ENCODE measurements at regions of chr19 and their contacts with region 1.

Region 1: GRCh38 chr19:46730953-46731501 is 14.1 kb upstream of the PRKD2 start:
- DNase-seq: peak; percentile 71
- ATAC-seq: peak; percentile 30

Region 2: DNA sequence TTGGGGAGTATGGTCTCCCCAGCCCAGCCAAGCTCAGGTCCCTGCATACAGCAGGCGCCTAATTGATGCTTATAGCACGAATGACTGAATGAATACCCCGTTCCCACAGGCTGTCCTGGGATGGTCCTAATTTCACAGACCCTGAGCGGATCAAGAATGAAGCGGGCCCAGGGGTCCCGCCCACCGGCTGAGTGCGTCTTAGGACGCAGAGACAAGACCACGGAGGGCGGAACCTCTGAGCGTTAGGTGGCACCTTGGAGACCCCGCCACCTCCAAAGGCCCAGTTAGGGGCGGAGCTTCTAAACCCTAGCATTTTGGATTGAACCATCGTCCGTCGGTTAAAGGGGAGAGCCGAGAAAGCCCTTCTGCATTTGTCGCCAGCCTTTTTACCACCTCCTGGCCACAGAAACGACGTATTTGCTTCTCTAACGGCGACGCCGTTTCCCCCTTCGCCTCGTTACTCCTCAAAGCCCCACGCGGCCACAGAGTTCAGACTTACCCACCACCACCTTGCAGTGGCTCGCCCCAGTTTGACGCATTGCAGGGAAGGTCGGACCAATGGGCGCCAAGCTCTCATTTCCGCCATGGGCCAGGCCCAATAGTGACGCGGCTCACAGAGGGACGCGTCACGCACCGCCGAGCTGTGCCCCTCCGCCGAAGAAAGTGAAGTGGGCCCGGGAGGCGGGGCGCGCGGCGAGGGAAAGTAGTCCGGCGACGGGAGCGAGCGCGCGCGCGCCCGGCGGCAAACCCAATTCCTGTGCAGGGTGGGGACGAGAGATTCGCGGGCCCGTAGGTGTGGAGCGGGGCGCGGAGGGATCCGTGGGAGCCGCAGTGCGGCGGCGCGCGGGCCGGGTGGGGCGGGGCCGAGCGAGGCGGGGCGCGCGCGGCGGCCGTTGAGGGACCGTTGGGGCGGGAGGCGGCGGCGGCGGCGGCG is 130.4 kb before region 1 on chr19:
- intact Hi-C with region 1: loop called (anchors 10 kb)
- DNase-seq: peak; percentile 99
- ATAC-seq: peak; percentile 90

Measured in Right ventricle myocardium superior (tissue), 1 donor.